MCF 10A (cell line): ENCODE measurements at regions of chr12 and their contacts with region 1.

Region 1: DNA sequence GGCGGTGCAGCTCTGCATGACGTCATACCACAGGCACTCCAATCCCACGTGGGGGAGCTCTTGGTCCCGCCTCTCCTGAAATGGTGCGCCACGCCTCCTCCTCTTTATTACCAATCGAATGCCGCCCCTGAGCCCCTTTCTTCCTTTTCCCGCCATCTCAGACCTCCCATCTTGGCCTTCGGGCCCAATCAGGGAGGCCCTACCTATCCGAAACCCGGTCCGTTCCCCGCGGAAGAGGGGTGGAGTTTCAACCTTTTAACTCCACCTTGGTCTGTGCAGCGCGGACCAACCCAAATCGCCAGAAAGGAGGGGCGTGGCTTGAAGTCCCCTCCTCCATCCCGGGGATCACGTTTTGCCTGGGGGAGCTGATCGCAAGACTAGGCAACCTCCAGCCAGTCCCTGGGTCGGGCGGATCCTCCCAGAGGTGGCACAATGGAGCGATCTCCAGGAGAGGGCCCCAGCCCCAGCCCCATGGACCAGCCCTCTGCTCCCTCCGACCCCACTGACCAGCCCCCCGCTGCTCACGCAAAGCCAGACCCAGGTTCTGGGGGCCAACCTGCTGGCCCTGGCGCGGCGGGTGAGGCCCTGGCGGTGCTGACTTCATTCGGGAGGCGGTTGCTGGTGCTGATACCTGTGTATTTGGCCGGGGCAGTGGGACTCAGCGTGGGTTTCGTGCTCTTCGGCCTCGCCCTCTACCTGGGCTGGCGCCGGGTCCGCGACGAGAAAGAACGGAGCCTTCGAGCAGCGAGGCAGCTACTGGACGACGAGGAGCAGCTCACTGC is at the start of gene ESYT1:
- DNase-seq: peak; percentile 100
- H3K4me3 Mint-ChIP-seq: peak within 1 kb of the TSS; percentile 84
- H3K27ac Mint-ChIP-seq: peak within 1 kb of the TSS; percentile 84
- H3K4me1 Mint-ChIP-seq: peaks cover 26% of the 10 kb centered on the region
- H3K27me3 Mint-ChIP-seq: no peaks in the 10 kb centered on the region
- CTCF ChIP-seq: no peak
- total RNA-seq, gene ESYT1: 111 and 123 TPM in 2 replicates

Region 2: DNA sequence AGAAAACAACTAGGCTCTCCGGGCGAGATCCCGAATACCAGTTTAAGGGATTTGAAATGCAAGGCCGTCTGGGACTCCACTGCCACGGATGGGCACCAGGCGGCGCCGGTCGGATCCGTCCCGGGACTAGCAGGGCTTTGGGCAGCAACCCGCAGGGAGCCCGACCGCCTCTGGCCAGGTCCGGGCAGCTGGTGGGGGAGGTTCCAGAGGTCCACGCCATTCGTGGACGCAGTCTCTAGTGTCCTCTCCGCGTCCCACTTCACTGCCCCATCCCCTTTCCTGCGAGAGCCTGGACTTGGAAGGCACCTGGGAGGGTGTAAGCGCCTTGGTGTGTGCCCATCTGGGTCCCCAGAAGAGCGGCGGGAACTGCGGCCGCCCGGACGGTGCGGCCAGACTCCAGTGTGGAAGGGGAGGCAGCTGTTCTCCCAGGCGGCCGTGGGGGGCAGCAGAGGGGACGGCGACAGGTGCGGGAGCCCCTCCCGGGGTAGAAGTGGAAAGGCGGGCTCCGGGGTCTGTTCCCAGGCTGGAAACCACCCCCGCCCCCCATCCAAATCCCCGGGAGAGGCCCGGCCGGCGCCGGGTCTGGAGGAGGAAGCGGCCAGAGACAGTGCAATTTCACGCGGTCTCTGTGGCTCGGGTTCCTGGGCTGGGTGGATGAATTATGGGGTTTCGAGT is 49.0 kb before region 1 on chr12:
- CTCF ChIA-PET with region 1: interaction called, 3 read pairs
- POLR2A ChIA-PET with region 1: interaction called, 14 read pairs
- intact Hi-C with region 1: no loop called
- DNase-seq: peak; percentile 85
- H3K4me3 Mint-ChIP-seq: peak overlapping the region; percentile 87
- H3K27ac Mint-ChIP-seq: no peak overlapping the region
- H3K4me1 Mint-ChIP-seq: no peaks in the 10 kb centered on the region
- H3K27me3 Mint-ChIP-seq: no peaks in the 10 kb centered on the region
- CTCF ChIP-seq: peak; percentile 60

Region 3: DNA sequence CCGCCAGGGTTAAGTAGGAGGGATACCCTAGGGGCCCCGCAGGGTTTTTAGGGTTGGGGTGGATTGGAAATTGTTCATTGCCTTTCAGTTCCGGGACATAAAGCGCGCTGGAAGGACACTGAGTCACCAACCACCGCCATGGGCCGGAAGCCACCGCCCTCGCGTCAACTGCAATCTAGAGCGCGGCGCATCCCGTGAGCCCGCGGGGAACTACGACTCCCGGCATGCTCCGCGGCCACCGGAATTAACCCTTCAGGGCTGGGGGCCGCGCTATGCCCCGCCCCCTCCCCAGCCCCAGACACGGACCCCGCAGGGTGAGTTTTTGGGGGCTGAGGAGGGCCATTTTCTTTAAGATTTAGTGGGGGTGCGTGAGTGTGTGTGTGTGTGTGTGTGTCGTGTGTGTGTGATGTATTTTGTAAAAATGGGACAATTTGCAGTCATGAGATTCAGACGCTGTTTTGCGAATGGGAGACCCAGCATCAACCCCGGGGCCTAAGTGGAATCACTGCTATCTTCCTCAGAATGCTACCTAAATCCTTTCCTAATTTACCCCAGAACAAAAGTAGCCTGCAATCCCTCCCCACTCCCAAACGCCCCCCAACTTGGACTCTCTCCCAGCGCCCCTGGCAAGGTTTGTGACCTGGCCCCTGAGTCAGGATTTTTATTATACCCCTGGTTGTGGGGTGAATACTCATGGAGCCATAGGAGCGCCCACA is 24.4 kb after region 1 on chr12 and contains the start of gene MYL6B:
- CTCF ChIA-PET with region 1: interaction called, 6 read pairs
- POLR2A ChIA-PET with region 1: interaction called, 39 read pairs
- intact Hi-C with region 1: loop called (anchors 1 kb)
- DNase-seq: peak; percentile 93
- H3K4me3 Mint-ChIP-seq: peak within 1 kb of the TSS; percentile 75
- H3K27ac Mint-ChIP-seq: peak within 1 kb of the TSS; percentile 62
- H3K4me1 Mint-ChIP-seq: peaks cover 18% of the 10 kb centered on the region
- H3K27me3 Mint-ChIP-seq: no peaks in the 10 kb centered on the region
- CTCF ChIP-seq: no peak
- total RNA-seq, gene MYL6B: 46.0 and 58.0 TPM in 2 replicates